Posterior vena cava (tissue), 2 donors: ENCODE measurements at regions of chr1 and their contacts with region 1.

Region 1: GRCh38 chr1:212782422-212783154 is 9.0 kb downstream of the NSL1 start:
- DNase-seq: no peak

Region 2: DNA sequence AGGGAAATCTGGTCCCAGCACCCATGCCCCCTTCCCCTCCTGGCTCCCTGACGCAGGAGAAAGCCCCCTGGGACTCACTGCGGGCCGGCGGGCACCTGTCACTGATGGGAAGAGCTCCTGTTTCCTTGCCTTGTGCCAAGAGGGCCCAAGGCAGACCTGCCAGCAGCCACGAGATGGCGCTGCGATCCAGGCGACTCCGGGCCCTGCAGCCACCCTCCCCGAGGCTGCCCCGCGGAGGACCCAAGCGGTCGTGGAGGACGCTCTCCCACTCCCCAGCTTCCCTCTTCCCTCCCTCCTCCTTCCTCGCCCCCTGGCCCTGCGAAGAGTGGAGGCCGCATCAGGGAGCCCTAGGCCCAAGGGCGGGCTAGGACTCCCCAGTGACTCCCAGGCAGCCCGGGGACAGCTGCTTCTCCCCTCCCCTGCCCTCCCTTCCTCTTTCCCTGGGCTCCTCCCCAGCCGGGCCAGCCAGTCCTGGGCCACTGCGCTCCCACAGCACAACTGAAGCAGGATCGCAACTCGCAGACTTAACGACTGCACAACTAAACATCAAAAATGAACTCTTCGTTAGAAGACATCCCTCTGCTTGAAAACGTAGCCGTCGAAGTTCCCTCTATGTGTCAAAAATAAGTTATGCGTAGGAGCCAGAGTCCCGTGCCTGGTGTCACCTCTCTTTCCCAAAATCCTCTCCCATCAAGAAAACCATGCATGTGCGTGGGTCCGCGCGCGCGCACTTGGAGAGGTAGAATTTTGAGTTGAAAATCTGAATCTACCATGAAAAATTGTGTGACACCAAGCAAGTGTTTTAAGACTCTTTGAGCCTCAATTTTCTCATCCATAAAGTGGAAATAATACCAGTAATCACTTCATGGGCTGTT is 117.1 kb before region 1 on chr1:
- intact Hi-C with region 1: loop called in 1 of 2 experiments (anchors 5 kb)
- DNase-seq: peak; percentile 94

Region 3: GRCh38 chr1:212760126-212760823 is 22.3 kb before region 1 on chr1:
- intact Hi-C with region 1: no loop called
- DNase-seq: no peak